ENCODE measurements at regions of chr2 and their contacts with region 1.

Region 1: GRCh38 chr2:177547122-177547521 is 154.5 kb downstream of the AGPS start:
- DNase-seq: no peak
- H3K4me3 ChIP-seq: no peak overlapping the region
- H3K27ac ChIP-seq: no peak overlapping the region
- H3K4me1 ChIP-seq: peaks cover 2% of the 10 kb centered on the region
- H3K27me3 ChIP-seq: no peaks in the 10 kb centered on the region
- CTCF ChIP-seq: no peak
- EP300 ChIP-seq: no peak
- POLR2A ChIP-seq: no peak

Region 2: GRCh38 chr2:176601066-176601465 is 946.1 kb before region 1 on chr2:
- intact Hi-C with region 1: loop called in 1 of 4 experiments (anchors 5 kb)
- DNase-seq: no peak
- H3K4me3 ChIP-seq: no peak overlapping the region
- H3K27ac ChIP-seq: no peak overlapping the region
- H3K4me1 ChIP-seq: no peaks in the 10 kb centered on the region
- H3K27me3 ChIP-seq: no peaks in the 10 kb centered on the region
- CTCF ChIP-seq: no peak
- EP300 ChIP-seq: no peak
- POLR2A ChIP-seq: no peak

Region 3: GRCh38 chr2:177148477-177149154 is 398.5 kb before region 1 on chr2:
- intact Hi-C with region 1: no loop called
- DNase-seq: peak; percentile 49 to 71 (median 70)
- H3K4me3 ChIP-seq: peak overlapping the region; percentile 33
- H3K27ac ChIP-seq: no peak overlapping the region
- H3K4me1 ChIP-seq: no peaks in the 10 kb centered on the region
- H3K27me3 ChIP-seq: no peaks in the 10 kb centered on the region
- CTCF ChIP-seq: peak in 2 of 3 donors; percentile 10 to 19
- EP300 ChIP-seq: no peak
- POLR2A ChIP-seq: no peak

Region 4: DNA sequence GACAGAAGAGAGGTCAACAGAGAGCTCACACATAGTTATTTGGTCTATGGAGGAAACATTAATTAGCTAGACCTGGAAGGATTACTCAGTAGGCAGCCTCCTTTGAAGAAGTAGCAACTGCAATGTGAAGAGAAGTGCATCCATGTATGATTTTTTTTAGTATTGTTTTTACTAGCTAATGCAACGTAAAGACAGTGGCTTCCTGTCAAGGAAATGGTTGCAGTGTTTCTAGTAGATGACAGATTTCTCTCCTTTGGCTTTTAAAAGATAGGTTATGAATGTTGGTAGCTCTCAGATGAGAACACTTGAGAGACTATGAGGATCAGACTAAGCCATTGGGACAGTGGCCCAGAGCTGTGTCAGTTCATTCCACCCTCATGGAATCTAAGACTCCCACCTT is 21.3 kb after region 1 on chr2:
- intact Hi-C with region 1: no loop called
- DNase-seq: no peak
- H3K4me3 ChIP-seq: no peak overlapping the region
- H3K27ac ChIP-seq: no peak overlapping the region
- H3K4me1 ChIP-seq: no peaks in the 10 kb centered on the region
- H3K27me3 ChIP-seq: no peaks in the 10 kb centered on the region
- CTCF ChIP-seq: no peak
- EP300 ChIP-seq: no peak
- POLR2A ChIP-seq: no peak

Region 5: DNA sequence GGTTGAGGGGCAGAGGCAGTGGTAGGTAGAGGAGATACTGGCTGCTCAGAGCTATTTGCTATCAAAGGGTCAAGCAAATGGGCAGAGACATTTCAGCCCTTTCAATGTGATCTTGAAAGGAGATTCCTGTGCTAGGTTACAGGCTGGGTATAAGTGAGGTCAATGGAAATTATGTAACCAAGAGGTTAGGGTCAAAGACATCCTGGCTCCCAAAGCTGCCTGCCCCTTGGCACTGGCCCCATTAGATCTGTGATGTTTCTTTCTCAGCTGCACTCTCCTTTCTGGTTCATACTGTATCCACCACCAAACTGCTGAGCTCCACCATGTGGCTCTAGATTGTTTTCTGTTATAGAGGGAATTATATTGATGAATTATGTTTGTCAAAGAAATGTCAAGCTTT is 45.8 kb after region 1 on chr2:
- intact Hi-C with region 1: loop called in 1 of 4 experiments (anchors 5 kb)
- DNase-seq: no peak
- H3K4me3 ChIP-seq: no peak overlapping the region
- H3K27ac ChIP-seq: no peak overlapping the region
- H3K4me1 ChIP-seq: no peaks in the 10 kb centered on the region
- H3K27me3 ChIP-seq: no peaks in the 10 kb centered on the region
- CTCF ChIP-seq: no peak
- EP300 ChIP-seq: no peak
- POLR2A ChIP-seq: no peak

Measured in ovary (tissue), 10 donors.